CD8-positive, alpha-beta memory T cell (primary cell): ENCODE measurements at regions of chr12 and their contacts with region 1.

Region 1: DNA sequence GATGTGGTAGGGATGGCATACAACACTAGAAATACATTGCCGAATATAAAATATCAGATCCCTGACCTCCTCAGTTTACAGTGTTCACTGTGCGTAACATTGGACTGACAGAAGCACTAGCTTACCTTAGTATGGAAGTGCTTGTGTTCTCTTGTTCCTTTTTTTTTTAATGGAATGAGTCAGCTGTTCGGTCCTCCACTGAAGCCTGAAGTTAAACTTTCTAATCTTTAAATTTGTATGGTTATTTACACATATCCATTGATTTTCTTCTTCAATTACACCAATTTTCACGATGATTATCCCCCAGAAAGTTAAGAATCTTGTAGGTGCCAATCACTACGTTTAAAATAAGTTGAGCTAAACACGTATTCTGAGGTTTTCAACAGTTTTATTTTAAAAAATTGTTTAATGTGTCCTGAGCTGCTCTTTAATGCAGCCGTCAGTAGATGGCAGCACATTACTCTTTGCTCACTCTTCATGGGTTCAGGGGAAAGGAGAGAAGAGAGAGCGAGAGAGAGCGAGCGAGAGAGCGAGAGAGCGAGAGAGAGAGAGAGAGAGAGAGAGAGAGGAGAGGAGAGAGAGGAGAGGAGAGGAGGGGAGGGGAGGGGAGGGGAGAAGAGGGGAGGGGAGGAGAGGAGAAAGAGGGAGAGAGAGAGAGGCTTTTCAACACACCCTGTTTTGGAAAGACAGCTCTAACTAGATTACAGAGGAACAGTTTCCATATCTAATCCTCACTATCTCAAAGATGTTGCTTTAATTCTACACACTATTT is 134.7 kb upstream of the SCAF11 start:
- DNase-seq: peak; percentile 20 to 67 (median 53)
- H3K4me3 ChIP-seq: no peak overlapping the region
- H3K4me3 Mint-ChIP-seq: peak overlapping the region in 6 of 7 donors; percentile 19 to 74 (median 40)
- H3K27ac ChIP-seq: no peak overlapping the region
- H3K27ac Mint-ChIP-seq: peak overlapping the region in 7 of 8 donors; percentile 5 to 83 (median 59)
- H3K4me1 ChIP-seq: peaks cover 3% of the 10 kb centered on the region
- H3K4me1 Mint-ChIP-seq: peaks cover 3 to 6% (median 6%) of the 10 kb centered on the region in 3 donors
- H3K27me3 ChIP-seq: no peaks in the 10 kb centered on the region
- H3K27me3 Mint-ChIP-seq: peaks cover 12 to 16% of the 10 kb centered on the region in 2 donors

Region 2: GRCh38 chr12:46110928-46111699 is 13.9 kb before region 1 on chr12:
- CTCF ChIA-PET with region 1: interaction called, 13 read pairs
- POLR2A ChIA-PET with region 1: no interaction called
- DNase-seq: no peak
- H3K4me3 ChIP-seq: no peak overlapping the region
- H3K4me3 Mint-ChIP-seq: no peak overlapping the region
- H3K27ac ChIP-seq: no peak overlapping the region
- H3K27ac Mint-ChIP-seq: no peak overlapping the region
- H3K4me1 ChIP-seq: no peaks in the 10 kb centered on the region
- H3K4me1 Mint-ChIP-seq: no peaks in the 10 kb centered on the region
- H3K27me3 ChIP-seq: no peaks in the 10 kb centered on the region
- H3K27me3 Mint-ChIP-seq: peaks cover 12 to 37% of the 10 kb centered on the region in 2 donors

Region 3: DNA sequence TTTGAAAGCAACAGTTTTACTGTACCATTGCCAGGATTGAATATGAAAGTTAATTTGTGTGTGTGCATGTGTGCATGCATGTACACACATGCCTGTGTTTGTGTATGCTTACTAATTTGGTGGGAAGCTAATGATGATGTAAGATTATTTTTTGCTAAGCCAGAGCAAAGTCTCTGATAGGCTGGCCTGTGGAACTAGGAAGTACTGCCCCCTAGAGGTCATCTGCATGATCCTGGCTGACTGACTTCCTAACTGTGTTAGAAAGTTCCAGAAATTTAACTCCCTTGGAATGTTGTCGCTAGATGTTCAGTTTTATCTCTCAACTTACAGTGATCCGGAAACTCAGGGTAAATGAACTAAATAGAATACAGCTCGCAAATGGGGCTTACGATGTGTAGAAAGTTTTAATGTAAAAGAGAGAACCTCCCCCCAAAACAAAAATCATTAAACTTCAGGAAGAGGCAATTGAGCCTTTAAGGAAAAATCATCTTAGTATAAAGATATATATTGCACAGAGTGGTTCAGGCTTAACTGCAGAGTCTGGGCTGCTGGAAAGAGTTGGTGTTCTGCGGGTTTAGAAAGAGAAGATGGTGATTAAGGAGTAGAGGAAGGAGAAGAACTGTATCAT is 178.1 kb after region 1 on chr12:
- CTCF ChIA-PET with region 1: interaction called, 32 read pairs
- POLR2A ChIA-PET with region 1: no interaction called
- DNase-seq: peak; percentile 18 to 72 (median 49)
- H3K4me3 ChIP-seq: no peak overlapping the region
- H3K4me3 Mint-ChIP-seq: no peak overlapping the region
- H3K27ac ChIP-seq: no peak overlapping the region
- H3K27ac Mint-ChIP-seq: peak overlapping the region in 1 of 8 donors; percentile 22
- H3K4me1 ChIP-seq: no peaks in the 10 kb centered on the region
- H3K4me1 Mint-ChIP-seq: peaks cover 1 to 8% (median 6%) of the 10 kb centered on the region in 3 donors
- H3K27me3 ChIP-seq: no peaks in the 10 kb centered on the region
- H3K27me3 Mint-ChIP-seq: peaks cover 1 to 3% of the 10 kb centered on the region in 2 donors

Region 4: GRCh38 chr12:47021298-47021697 is 896.3 kb after region 1 on chr12:
- CTCF ChIA-PET with region 1: interaction called, 17 read pairs
- POLR2A ChIA-PET with region 1: no interaction called
- DNase-seq: peak in 2 of 5 donors; percentile 30 to 47
- H3K4me3 ChIP-seq: no peak overlapping the region
- H3K4me3 Mint-ChIP-seq: no peak overlapping the region
- H3K27ac ChIP-seq: no peak overlapping the region
- H3K27ac Mint-ChIP-seq: no peak overlapping the region
- H3K4me1 ChIP-seq: no peaks in the 10 kb centered on the region
- H3K4me1 Mint-ChIP-seq: no peaks in the 10 kb centered on the region
- H3K27me3 ChIP-seq: no peaks in the 10 kb centered on the region
- H3K27me3 Mint-ChIP-seq: peaks cover 12 to 46% of the 10 kb centered on the region in 2 donors